ENCODE measurements at regions of chr3 and their contacts with region 1.

Region 1: DNA sequence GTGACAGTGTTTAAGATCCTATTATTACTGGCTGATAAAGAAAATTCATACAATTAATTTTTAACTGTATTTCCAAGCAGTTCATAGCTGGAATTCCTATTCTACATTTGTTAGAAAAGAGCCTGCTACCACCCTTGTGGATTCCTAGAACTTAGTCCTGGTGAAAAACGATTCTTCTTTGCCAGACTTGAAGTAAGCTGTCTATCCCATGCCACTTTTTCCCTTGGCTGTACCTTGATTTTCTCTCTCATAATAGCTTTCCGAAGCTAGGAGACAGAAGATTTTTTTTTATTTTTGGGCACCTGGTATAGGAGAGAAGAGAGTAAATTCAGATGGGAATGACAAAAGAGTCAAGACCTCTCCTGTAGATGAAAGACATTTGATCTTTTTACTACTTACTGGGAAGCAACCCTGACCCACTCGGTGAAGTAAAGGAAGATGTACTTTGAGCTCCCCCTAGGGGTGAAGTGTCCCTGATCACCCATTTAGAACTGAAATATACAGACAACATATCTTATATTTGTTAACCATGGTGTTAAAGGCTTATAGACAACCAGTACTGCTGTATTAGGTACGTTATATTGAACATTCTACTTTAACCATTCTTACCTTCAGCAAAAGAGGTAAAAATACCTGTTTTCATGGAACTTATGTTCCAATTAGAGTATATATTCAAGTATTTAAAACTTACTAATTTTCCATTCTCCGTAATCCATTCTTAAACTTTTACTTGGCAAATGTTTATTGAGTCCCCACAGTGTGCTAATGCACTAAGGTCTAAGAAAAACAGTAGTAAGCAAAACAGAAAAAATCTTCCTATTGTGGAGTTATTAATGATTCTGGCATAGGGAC is 36.2 kb upstream of the C3orf38 start:
- DNase-seq: peak; percentile 75
- ATAC-seq: peak; percentile 84
- H3K4me3 ChIP-seq: no peak overlapping the region
- H3K4me3 Mint-ChIP-seq: no peak overlapping the region
- H3K27ac ChIP-seq: no peak overlapping the region
- H3K27ac Mint-ChIP-seq: peak overlapping the region; percentile 22
- H3K4me1 ChIP-seq: no peaks in the 10 kb centered on the region
- H3K4me1 Mint-ChIP-seq: peaks cover 8% of the 10 kb centered on the region
- H3K27me3 ChIP-seq: no peaks in the 10 kb centered on the region
- H3K27me3 Mint-ChIP-seq: no peaks in the 10 kb centered on the region
- CTCF ChIP-seq: peak; percentile 87

Region 2: GRCh38 chr3:86126552-86126951 is 1987.0 kb before region 1 on chr3:
- CTCF ChIA-PET with region 1: no interaction called
- POLR2A ChIA-PET with region 1: no interaction called
- intact Hi-C with region 1: no loop called
- DNase-seq: no peak
- ATAC-seq: no peak
- H3K4me3 ChIP-seq: no peak overlapping the region
- H3K4me3 Mint-ChIP-seq: no peak overlapping the region
- H3K27ac ChIP-seq: no peak overlapping the region
- H3K27ac Mint-ChIP-seq: no peak overlapping the region
- H3K4me1 ChIP-seq: no peaks in the 10 kb centered on the region
- H3K4me1 Mint-ChIP-seq: no peaks in the 10 kb centered on the region
- H3K27me3 ChIP-seq: no peaks in the 10 kb centered on the region
- H3K27me3 Mint-ChIP-seq: no peaks in the 10 kb centered on the region
- CTCF ChIP-seq: no peak

Region 3: GRCh38 chr3:87298111-87298718 is 815.3 kb before region 1 on chr3:
- CTCF ChIA-PET with region 1: interaction called, 11 read pairs
- POLR2A ChIA-PET with region 1: no interaction called
- intact Hi-C with region 1: loop called (anchors 5 kb)
- DNase-seq: peak; percentile 38
- ATAC-seq: peak; percentile 62
- H3K4me3 ChIP-seq: no peak overlapping the region
- H3K4me3 Mint-ChIP-seq: no peak overlapping the region
- H3K27ac ChIP-seq: no peak overlapping the region
- H3K27ac Mint-ChIP-seq: no peak overlapping the region
- H3K4me1 ChIP-seq: no peaks in the 10 kb centered on the region
- H3K4me1 Mint-ChIP-seq: no peaks in the 10 kb centered on the region
- H3K27me3 ChIP-seq: no peaks in the 10 kb centered on the region
- H3K27me3 Mint-ChIP-seq: peaks cover 4% of the 10 kb centered on the region
- CTCF ChIP-seq: peak; percentile 90

Region 4: GRCh38 chr3:87350364-87351199 is 763.0 kb before region 1 on chr3:
- CTCF ChIA-PET with region 1: interaction called, 39 read pairs
- POLR2A ChIA-PET with region 1: no interaction called
- intact Hi-C with region 1: loop called (anchors 1 kb)
- DNase-seq: peak; percentile 61
- ATAC-seq: peak; percentile 67
- H3K4me3 ChIP-seq: no peak overlapping the region
- H3K4me3 Mint-ChIP-seq: no peak overlapping the region
- H3K27ac ChIP-seq: no peak overlapping the region
- H3K27ac Mint-ChIP-seq: no peak overlapping the region
- H3K4me1 ChIP-seq: no peaks in the 10 kb centered on the region
- H3K4me1 Mint-ChIP-seq: no peaks in the 10 kb centered on the region
- H3K27me3 ChIP-seq: no peaks in the 10 kb centered on the region
- H3K27me3 Mint-ChIP-seq: peaks cover 8% of the 10 kb centered on the region
- CTCF ChIP-seq: peak; percentile 99

Region 5: GRCh38 chr3:87771341-87772192 is 342.0 kb before region 1 on chr3:
- CTCF ChIA-PET with region 1: interaction called, 26 read pairs
- POLR2A ChIA-PET with region 1: no interaction called
- intact Hi-C with region 1: no loop called
- DNase-seq: peak; percentile 59
- ATAC-seq: peak; percentile 70
- H3K4me3 ChIP-seq: no peak overlapping the region
- H3K4me3 Mint-ChIP-seq: no peak overlapping the region
- H3K27ac ChIP-seq: no peak overlapping the region
- H3K27ac Mint-ChIP-seq: no peak overlapping the region
- H3K4me1 ChIP-seq: no peaks in the 10 kb centered on the region
- H3K4me1 Mint-ChIP-seq: no peaks in the 10 kb centered on the region
- H3K27me3 ChIP-seq: no peaks in the 10 kb centered on the region
- H3K27me3 Mint-ChIP-seq: peaks cover 30% of the 10 kb centered on the region
- CTCF ChIP-seq: peak; percentile 76

Region 6: DNA sequence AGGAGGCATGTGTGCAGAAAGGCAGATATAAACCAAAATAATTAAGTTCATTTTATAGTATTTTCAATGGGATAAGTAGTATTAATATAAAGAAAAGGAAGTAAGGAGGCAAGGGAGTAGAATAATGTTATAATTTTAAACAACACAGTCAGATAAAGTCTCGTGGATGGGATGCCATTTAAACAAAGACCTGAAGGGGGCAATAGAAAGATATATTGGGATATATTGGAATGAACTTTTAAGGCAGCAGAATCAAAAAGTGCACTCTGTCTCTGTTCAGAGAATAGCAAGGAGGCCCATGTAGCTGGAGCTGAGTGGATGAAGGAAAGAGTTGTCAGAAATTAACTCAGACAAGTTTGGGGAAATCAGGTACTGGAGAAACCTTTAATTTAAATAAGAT is 213.5 kb before region 1 on chr3:
- CTCF ChIA-PET with region 1: interaction called, 3 read pairs
- POLR2A ChIA-PET with region 1: no interaction called
- intact Hi-C with region 1: loop called (anchors 2 kb)
- DNase-seq: no peak
- ATAC-seq: no peak
- H3K4me3 ChIP-seq: no peak overlapping the region
- H3K4me3 Mint-ChIP-seq: no peak overlapping the region
- H3K27ac ChIP-seq: no peak overlapping the region
- H3K27ac Mint-ChIP-seq: no peak overlapping the region
- H3K4me1 ChIP-seq: no peaks in the 10 kb centered on the region
- H3K4me1 Mint-ChIP-seq: no peaks in the 10 kb centered on the region
- H3K27me3 ChIP-seq: no peaks in the 10 kb centered on the region
- H3K27me3 Mint-ChIP-seq: no peaks in the 10 kb centered on the region
- CTCF ChIP-seq: peak; percentile 35

Region 7: GRCh38 chr3:88058591-88059368 is 54.8 kb before region 1 on chr3 and contains the starts of genes CGGBP1 and ZNF654:
- CTCF ChIA-PET with region 1: interaction called, 7 read pairs
- POLR2A ChIA-PET with region 1: no interaction called
- intact Hi-C with region 1: loop called (anchors 5 kb)
- DNase-seq: peak; percentile 99
- ATAC-seq: peak; percentile 89
- H3K4me3 ChIP-seq: peak within 1 kb of the TSS; percentile 79 to 96 (median 87)
- H3K4me3 Mint-ChIP-seq: peak within 1 kb of the TSS; percentile 98
- H3K27ac ChIP-seq: peak within 1 kb of the TSS; percentile 86 to 89
- H3K27ac Mint-ChIP-seq: peak within 1 kb of the TSS; percentile 93
- H3K4me1 ChIP-seq: peaks cover 14 to 27% of the 10 kb centered on the region in 2 donors
- H3K4me1 Mint-ChIP-seq: peaks cover 53% of the 10 kb centered on the region
- H3K27me3 ChIP-seq: no peaks in the 10 kb centered on the region
- H3K27me3 Mint-ChIP-seq: no peaks in the 10 kb centered on the region
- CTCF ChIP-seq: no peak
- total RNA-seq, gene CGGBP1: 119 and 121 TPM in 2 replicates
- total RNA-seq, gene ZNF654: 19.5 and 22.1 TPM in 2 replicates

Region 8: DNA sequence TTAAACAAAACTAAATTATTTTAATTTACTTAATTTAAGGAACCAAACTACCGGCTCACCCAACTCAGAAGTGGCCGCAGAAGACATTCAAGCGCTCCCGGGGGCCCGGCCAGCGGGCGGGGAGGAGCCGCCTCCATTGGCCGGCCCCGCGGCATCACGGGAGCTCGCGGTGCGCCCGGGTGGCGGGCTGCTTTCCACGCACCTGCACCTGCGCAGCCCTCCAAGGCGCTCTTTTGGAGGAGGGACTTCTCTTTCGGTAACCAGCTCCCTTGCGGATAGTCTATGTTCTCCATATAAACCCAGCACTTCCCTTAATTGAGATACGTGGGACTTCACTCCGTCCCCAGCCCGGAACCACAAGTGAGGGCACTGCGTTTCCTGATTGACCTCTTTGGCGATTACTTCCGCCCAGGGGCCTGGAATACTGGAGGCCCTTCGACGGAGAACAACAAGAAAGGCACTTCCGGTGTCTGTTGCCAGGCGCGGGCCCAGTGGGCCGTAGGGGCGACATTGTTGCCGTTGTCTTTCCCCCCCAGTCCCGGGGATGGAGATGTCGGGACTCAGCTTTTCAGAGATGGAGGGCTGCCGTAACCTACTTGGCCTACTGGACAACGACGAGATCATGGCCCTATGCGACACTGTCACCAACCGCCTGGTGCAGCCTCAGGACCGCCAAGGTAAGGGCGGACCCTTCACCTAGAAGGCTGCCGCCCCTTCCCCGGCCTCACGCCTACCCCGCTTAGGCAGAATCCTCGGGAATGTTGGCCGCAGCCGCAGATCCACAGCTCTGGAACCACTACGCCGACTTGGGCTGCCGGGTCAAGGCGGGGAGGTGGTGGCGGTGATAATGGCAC is 36.2 kb after region 1 on chr3 and contains the start of gene C3orf38:
- CTCF ChIA-PET with region 1: interaction called, 10 read pairs
- POLR2A ChIA-PET with region 1: no interaction called
- intact Hi-C with region 1: loop called (anchors 5 kb)
- DNase-seq: peak; percentile 90
- ATAC-seq: peak; percentile 88
- H3K4me3 ChIP-seq: peak within 1 kb of the TSS; percentile 88 to 100 (median 95)
- H3K4me3 Mint-ChIP-seq: peak within 1 kb of the TSS; percentile 99
- H3K27ac ChIP-seq: peak within 1 kb of the TSS; percentile 93 to 98
- H3K27ac Mint-ChIP-seq: peak within 1 kb of the TSS; percentile 99
- H3K4me1 ChIP-seq: peaks cover 25 to 33% of the 10 kb centered on the region in 2 donors
- H3K4me1 Mint-ChIP-seq: peaks cover 35% of the 10 kb centered on the region
- H3K27me3 ChIP-seq: no peaks in the 10 kb centered on the region
- H3K27me3 Mint-ChIP-seq: no peaks in the 10 kb centered on the region
- CTCF ChIP-seq: no peak
- total RNA-seq, gene C3orf38: 42.5 and 50.0 TPM in 2 replicates

Measured in B cell (primary cell).